Posterior vena cava (tissue), 2 donors: ENCODE measurements at regions of chr7 and their contacts with region 1.

Region 1: DNA sequence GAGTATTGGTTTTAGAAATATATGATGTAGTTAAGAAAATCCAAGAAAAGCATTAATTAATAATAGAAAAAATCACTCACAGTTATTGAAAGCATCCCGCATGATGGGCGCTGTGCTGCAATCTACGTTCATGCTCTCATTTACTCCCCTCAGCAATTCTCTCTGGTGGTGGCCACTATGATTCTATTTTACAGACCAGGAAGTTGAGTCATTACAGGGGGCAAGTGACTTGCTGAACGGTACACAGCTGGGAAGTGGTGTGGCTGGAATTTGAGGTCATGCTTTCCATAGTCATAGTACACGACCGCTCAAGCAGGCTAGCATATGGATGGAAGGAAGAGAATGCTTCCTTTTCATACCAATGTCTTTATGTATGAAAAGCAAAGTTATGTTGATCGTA is 117.4 kb downstream of the TES start:
- DNase-seq: no peak

Region 2: GRCh38 chr7:116271963-116272839 is 55.6 kb before region 1 on chr7:
- intact Hi-C with region 1: loop called in 1 of 2 experiments (anchors 10 kb)
- DNase-seq: no peak

Region 3: GRCh38 chr7:116290740-116291139 is 37.0 kb before region 1 on chr7:
- intact Hi-C with region 1: loop called in 1 of 2 experiments (anchors 1 kb)
- DNase-seq: no peak

Region 4: GRCh38 chr7:116354546-116355408 is 27.0 kb after region 1 on chr7:
- intact Hi-C with region 1: no loop called
- DNase-seq: peak; percentile 86

Region 5: DNA sequence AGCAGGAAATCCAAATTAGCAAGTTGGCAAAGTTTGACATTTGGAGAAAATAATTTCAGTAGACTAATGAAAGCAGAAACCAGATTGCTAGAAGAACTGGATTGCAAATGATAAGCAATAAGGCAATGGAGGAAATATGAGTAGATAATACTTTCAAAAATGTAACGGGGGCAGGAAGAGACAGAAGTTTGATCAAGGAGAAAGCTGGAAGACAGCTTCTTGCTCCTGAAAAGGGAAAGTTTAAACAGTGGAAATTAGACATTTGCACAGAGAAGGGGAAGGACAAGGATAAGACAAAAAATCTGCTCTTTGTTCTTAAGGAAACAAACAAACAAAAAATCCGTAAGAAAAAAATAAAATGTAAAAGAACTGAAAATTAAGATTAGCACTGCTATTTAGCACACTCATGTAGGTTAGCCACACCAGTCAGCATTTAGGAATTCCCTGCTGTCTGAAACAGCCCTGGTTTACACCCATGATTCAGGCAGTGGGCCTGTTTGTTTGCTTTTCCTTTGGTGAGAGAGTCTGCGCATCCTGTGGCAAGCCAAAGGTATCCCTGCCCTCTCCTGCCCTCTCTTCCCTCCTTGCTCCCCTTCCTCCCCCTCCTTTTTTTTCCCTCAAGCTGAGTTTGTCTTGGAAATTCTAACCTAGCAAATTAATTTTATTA is 67.5 kb after region 1 on chr7:
- intact Hi-C with region 1: loop called in 1 of 2 experiments (anchors 1 kb)
- DNase-seq: no peak